ENCODE measurements at regions of chr9 and their contacts with region 1.

Region 1: DNA sequence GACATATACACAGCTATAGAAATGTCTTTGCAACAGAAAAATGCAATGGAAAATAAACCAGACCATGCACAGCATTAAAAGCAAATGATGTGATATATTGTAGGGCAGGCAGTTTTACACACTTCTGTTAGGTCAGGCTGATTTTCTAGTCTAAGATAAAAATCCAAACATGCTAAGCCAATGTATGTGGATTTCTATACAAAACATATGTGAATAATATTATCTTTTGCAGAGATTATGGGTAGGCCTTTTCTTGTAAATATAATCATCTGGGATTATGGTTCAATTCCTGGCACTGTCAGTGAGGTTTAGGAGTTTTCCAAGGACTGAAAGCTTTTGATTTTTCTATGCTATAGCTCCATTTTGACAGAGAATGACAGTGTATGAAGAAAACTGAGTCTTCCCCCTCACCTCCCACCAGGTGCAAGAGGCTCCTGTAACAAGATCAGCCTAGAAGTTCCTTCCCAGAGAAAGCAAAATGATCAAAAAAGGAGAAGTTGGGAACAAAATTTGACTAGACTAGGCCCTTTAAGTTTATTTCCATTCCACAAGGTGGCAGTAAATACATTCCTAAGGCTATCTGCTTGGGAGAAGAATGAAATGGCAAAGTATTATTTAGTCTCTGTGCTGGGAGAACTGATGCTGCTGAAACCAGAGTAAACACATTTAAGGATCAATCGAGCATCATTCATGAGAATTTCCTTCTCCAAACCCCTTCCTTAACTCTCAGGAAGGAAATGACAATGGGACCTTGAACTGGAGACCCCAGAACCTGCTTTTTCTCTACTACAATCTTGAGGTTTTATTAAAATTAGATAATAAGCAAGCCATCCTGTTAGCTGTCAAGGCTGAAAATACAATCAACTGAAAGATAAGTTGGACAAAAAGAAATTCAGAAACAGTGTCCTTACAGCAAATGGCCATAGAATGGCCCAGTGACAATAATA is 133.0 kb upstream of the TUT7 start:
- DNase-seq: no peak
- ATAC-seq: peak; percentile 81

Region 2: DNA sequence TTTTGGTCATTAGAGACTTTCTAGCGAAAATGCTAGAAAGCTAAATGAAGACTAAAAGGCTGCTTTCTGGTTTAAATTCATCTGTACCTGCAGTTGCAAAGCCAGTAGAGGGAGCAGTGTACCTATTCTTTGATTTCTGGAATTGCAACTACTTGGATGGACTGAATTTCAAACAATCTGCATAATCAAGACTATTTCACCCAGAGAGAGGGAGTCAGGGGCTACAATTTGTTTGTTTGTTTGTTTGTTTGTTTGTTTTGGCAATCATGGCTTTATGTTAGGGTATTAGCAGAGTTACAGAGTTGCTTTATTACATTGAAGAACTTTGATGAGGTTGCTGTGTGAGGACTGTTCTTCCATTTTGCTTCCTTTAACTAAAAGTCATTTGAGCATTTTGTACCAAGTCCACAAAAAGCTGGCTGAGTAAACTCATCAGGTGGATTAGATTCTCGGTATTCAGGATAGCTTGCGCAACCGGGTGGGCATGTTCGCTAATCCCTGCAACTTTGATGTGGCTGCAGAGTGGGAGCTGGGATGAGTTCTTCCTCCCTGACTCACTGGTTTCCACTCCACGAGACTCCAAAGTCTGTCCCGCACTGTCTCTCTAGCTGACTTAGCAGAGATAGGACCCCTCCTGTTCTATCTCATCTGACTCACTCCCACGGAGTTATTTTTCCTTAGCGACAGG is 53.0 kb before region 1 on chr9:
- intact Hi-C with region 1: no loop called
- DNase-seq: peak; percentile 43
- ATAC-seq: peak; percentile 82 to 99

Region 3: DNA sequence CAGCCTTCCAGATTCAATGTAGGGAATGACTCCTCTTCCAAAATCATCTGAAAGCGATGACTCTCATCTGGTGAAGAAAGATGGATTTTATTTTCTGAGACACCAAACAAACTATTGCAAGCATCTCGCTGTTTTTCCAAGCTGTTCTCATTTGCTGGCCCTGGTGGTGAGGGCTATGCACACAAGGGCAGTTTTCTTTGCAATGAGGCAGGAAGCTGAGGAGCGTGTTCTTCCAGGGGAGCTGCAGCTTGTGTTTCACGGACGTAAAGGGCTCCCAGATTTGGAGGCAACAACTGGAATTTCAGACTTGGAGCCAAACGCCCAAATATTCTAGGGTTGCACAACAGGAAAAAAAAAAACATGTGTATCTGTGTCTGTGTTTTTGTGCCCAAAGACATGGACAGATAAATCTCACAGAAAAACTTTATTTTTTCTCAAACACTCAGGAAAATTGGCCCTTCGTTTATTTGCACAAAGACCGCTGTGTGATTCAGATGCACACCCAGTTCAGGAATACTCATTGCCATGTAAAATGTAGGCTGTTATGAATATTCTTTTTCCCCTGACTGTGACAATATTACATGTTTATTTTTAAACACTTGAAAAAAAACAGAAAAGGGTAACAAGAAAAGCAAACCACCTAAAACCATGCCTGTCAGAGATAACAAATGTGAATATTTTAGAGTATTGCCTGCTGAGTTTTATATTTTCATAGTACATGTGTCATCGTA is 308.8 kb after region 1 on chr9:
- intact Hi-C with region 1: loop called in 1 of 2 experiments (anchors 10 kb)
- DNase-seq: peak; percentile 51
- ATAC-seq: peak; percentile 90 to 91

Region 4: DNA sequence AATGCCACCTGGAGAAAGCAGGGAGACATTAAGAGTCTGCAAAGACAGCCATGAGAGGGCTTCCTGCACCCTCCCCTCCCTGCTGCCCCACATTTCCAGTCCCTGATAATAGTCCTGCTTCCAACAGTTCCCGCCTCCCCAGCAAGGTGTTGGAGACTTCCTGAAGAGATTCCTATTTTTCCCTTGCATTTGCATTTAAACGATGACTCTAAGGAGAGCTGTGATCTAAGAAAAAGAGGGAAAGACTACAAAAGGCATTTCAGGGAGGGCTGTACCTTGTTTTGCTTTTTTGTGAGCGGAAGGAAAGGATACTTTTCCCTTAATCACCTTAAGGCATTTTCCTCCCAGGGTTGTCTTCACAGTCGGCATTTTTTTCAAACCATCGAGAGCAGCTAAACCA is 398.1 kb after region 1 on chr9:
- intact Hi-C with region 1: no loop called
- DNase-seq: no peak
- ATAC-seq: no peak

Region 5: DNA sequence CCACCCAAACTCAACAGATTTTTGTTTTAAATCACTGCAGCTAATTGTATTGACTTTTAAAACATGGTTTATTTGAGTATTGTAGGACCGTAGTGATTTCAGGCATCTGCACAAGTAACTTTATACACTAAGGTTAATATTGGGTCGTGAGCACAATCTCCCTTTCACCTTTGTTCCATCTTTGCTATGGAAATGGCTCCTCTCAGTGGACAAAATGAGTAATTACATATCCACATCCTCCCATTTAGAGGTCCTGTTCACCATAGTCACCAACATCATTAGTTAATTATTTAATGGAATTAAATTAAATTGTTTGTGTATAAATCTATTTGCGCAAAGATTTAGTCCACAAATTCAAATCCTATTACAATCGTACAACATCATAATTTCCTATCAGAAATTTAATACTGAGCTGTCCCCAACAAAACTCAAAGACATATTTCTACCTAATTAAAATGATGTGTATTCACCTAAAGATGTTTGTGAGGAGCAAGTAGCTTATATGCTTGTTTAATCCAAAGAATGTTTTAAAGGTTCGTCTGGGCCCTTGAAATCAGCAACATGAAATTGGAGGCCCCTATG is 837.5 kb after region 1 on chr9:
- intact Hi-C with region 1: loop called (anchors 1 to 5 kb)
- DNase-seq: no peak
- ATAC-seq: peak; percentile 76 to 81

Measured in left cardiac atrium (tissue), 4 donors.